ENCODE measurements at regions of chr5 and their contacts with region 1.

Region 1: DNA sequence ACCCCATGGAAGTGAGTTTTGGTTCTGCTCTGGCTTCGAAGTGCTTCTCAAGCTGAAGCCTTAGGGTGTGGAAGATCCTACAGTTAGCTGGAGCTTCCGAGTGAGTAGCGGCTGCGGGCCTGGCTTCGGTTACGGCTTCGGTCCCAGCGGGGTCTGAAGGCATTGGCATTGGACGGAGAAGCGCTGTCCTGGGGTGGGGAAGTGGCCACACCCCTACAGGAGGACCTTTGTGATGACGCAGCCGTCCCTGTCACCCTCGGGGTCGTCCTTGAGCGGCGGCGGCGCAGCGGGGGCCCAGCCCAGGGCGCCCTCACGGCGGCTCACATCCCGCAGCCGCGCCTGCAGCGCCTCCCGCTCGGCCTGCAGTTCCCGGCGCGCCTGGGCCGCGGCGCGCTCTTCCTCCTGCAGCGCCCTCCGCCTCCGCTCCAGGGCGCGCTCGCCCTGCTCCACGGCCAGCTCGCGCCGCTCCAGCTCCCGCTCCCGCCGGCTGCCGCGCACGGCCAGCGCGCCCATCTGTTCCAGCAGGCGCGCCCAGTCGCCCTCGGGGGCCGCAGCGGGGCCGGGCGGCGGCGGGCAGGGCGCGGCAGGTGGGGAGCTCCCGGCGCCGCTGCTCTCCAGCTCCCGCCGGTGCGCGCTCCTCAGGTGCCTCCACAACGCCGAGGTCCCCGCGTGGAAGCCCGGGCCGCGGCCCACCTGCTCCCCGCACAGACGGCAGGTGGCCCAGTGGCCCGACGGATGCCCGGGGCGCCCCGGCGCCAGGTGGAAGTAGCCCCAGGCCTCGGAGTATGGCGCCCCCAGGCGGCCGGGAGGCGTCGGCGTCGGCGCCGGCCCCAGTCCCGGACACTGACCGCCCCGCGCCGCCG is 9.9 kb downstream of the ZBED3 start:
- DNase-seq: peak; percentile 87
- CTCF ChIP-seq: peak; percentile 87

Region 2: DNA sequence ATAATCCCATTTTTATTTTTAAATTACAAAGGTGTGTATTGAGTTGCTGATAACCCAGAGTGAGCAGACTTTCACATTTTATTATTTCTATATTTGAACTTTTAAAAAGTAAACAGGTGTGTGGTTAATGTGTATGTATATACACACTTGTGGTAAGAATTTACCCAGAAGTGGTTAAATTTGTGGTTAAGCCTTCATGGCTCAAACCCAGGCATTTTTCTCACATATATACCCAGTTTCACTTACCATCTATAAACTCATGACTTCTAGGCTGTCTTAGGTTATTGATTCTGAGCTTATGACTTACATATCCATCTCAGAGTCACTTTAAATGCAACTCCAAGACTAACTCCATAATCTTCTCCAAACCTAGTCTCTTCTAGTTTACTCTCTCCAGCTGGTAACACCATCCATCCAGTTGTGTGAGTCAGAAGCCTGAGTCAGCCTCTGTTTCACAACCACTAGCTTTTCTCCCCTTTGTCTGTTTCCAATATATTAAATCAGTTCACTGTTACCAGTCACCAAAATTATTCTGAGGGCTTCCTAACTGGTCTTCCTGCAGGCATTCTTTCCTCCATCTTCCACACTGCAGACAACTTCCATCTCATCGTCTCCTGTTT is 10.3 kb before region 1 on chr5:
- CTCF ChIA-PET with region 1: interaction called, 49 read pairs
- POLR2A ChIA-PET with region 1: no interaction called
- DNase-seq: no peak
- CTCF ChIP-seq: no peak